ENCODE measurements at regions of chr13 and their contacts with region 1.

Region 1: GRCh38 chr13:76009491-76009890 is 373.4 kb downstream of the LMO7 start:
- DNase-seq: no peak
- ATAC-seq: no peak
- H3K4me3 ChIP-seq: no peak overlapping the region
- H3K27ac ChIP-seq: no peak overlapping the region
- H3K4me1 ChIP-seq: peaks cover 0 to 5% of the 10 kb centered on the region in 2 experiments; a peak in 3 of 5 replicates
- H3K27me3 ChIP-seq: no peaks in the 10 kb centered on the region
- CTCF ChIP-seq: no peak
- EP300 ChIP-seq: no peak
- POLR2A ChIP-seq: no peak
- RAD21 ChIP-seq: no peak

Region 2: GRCh38 chr13:75960538-75960994 is 48.9 kb before region 1 on chr13:
- CTCF ChIA-PET with region 1: no interaction called
- POLR2A ChIA-PET with region 1: no interaction called
- in situ Hi-C with region 1: no loop called
- intact Hi-C with region 1: loop called (anchors 5 kb)
- DNase-seq: peak in 2 of 4 experiments; percentile 15 to 30
- ATAC-seq: peak; percentile 82
- H3K4me3 ChIP-seq: no peak overlapping the region
- H3K27ac ChIP-seq: no peak overlapping the region
- H3K4me1 ChIP-seq: peaks cover 0 to 27% of the 10 kb centered on the region in 2 experiments; a peak in 3 of 5 replicates
- H3K27me3 ChIP-seq: no peaks in the 10 kb centered on the region
- CTCF ChIP-seq: no peak
- EP300 ChIP-seq: no peak
- POLR2A ChIP-seq: no peak
- RAD21 ChIP-seq: no peak

Measured in K562 (cell line).